ENCODE measurements at regions of chr1 and their contacts with region 1.

Region 1: DNA sequence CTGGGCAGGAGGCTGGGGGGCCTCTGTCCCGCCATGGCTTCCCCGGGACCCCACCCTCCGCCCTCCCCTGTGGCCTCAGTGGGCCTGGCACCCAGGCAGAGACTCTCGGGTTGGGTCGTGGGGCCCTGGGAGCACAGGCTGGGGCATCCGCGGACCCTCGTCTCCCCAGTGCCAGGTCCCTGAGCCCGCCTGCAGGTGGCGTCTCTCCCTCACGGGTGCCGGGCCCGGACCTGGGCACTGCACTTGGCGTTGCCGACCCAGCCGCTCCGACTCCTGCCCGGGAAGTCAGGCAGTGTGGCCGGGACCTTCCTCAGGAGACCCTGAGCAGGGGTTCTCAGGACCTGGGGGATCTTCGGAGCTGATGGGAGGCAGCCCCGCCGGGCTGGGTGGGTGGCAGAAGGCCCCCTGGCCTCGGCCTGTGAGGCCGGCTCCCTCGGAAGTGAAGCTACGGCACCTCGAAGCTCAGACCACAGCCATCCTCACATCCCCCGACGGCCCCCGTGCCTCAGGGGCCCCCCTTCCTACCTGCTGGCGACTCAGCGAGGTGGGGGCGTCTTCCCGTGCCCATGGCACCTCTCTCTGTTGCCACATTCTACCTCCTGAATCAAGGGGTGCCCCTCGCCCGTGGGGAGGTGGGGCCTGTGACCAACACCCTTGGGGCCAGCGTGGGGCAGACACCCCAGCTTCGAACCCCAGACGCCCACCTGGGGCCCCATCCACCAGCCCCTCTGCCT is 6.4 kb upstream of the C1orf159 start:
- DNase-seq: peak; percentile 89
- H3K4me3 Mint-ChIP-seq: no peak overlapping the region
- H3K27ac Mint-ChIP-seq: no peak overlapping the region
- H3K4me1 Mint-ChIP-seq: peaks cover 6% of the 10 kb centered on the region
- H3K27me3 Mint-ChIP-seq: peaks cover 7% of the 10 kb centered on the region

Region 2: GRCh38 chr1:890661-891060 is 231.6 kb before region 1 on chr1:
- CTCF ChIA-PET with region 1: no interaction called
- POLR2A ChIA-PET with region 1: no interaction called
- intact Hi-C with region 1: no loop called
- DNase-seq: no peak
- H3K4me3 Mint-ChIP-seq: no peak overlapping the region
- H3K27ac Mint-ChIP-seq: no peak overlapping the region
- H3K4me1 Mint-ChIP-seq: peaks cover 14% of the 10 kb centered on the region
- H3K27me3 Mint-ChIP-seq: peaks cover 40% of the 10 kb centered on the region

Region 3: GRCh38 chr1:1079408-1080121 is 42.7 kb before region 1 on chr1:
- CTCF ChIA-PET with region 1: no interaction called
- POLR2A ChIA-PET with region 1: no interaction called
- intact Hi-C with region 1: no loop called
- DNase-seq: peak; percentile 54
- H3K4me3 Mint-ChIP-seq: peak overlapping the region; percentile 32
- H3K27ac Mint-ChIP-seq: no peak overlapping the region
- H3K4me1 Mint-ChIP-seq: peaks cover 6% of the 10 kb centered on the region
- H3K27me3 Mint-ChIP-seq: peaks cover 4% of the 10 kb centered on the region

Region 4: GRCh38 chr1:1144122-1144842 is 22.0 kb after region 1 on chr1:
- CTCF ChIA-PET with region 1: no interaction called
- POLR2A ChIA-PET with region 1: no interaction called
- intact Hi-C with region 1: no loop called
- DNase-seq: peak; percentile 80
- H3K4me3 Mint-ChIP-seq: peak overlapping the region; percentile 39
- H3K27ac Mint-ChIP-seq: peak overlapping the region; percentile 89
- H3K4me1 Mint-ChIP-seq: peaks cover 19% of the 10 kb centered on the region
- H3K27me3 Mint-ChIP-seq: no peaks in the 10 kb centered on the region

Region 5: GRCh38 chr1:1200851-1201810 is 78.9 kb after region 1 on chr1:
- CTCF ChIA-PET with region 1: interaction called, 13 read pairs
- POLR2A ChIA-PET with region 1: interaction called, 3 read pairs
- intact Hi-C with region 1: no loop called
- DNase-seq: peak; percentile 93
- H3K4me3 Mint-ChIP-seq: peak overlapping the region; percentile 56
- H3K27ac Mint-ChIP-seq: peak overlapping the region; percentile 78
- H3K4me1 Mint-ChIP-seq: peaks cover 13% of the 10 kb centered on the region
- H3K27me3 Mint-ChIP-seq: no peaks in the 10 kb centered on the region

Region 6: DNA sequence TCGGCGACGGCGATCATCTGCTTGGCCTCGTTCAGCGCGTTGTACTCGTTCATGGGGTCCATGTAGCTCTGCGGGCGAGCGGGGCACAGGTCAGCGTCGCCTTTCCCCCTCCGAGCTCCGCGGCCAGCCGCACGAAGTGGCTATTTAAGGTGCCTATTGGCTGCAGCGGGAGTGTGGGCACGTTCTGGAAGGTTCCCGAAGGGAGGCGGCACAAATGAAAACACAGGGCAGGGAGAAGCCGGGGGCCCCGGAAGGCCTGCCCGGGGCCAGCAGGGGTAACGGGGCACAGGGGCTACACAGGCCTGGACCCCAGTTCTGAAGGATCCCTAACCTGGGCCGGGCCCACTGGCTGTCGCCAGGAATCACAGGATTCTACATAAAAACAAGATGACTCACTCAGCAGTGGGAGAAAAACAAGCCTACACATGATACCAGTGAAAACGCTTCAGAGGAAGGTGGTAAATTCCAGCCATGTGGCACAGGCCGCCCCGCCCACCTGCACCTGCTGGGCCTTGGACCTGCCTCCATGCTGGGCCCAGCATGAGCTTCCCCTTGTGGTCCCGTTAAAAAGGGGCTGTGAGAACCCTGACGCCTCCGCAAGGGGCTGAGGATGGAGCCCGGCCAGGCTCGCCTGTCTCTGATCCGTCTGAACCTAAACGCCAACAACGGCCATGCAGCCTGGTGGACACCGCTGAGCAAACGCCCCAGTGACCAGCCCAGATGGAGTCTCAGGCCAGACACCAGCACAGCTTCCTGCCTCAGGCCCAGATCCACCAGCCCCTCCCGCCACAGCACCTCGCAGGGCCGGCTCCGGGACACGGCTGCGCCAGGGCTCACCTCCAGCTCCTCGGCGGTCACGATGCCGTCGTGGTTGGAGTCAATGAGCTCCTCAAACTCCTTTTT is 95.6 kb after region 1 on chr1:
- CTCF ChIA-PET with region 1: interaction called, 18 read pairs
- POLR2A ChIA-PET with region 1: interaction called, 3 read pairs
- intact Hi-C with region 1: no loop called
- DNase-seq: peak; percentile 84
- H3K4me3 Mint-ChIP-seq: peak overlapping the region; percentile 78
- H3K27ac Mint-ChIP-seq: peak overlapping the region; percentile 100
- H3K4me1 Mint-ChIP-seq: peaks cover 62% of the 10 kb centered on the region
- H3K27me3 Mint-ChIP-seq: no peaks in the 10 kb centered on the region

Region 7: DNA sequence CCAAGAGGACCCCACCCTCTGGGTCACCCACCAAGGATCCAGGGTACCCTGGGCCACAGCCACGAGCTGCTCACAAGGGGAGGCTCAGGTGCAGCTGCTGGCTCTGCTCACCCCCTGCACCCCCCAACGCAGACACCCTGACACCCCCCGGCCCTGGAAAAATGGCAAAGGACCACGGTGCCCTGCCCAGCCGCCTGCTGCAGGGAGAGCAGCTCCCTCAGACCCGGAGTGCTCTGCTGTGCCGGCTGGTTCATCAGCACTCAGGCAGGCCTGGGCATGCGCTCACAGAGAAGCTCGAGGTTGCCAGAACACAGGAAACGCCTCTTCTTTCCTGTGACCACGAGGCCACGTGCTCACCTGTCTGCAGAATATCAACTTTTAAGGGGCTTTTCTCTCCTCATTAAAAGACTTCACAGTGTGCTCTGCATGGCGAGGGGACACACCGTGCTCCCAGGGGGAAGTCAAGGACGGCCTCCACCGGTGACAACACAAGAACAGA is 128.6 kb after region 1 on chr1:
- CTCF ChIA-PET with region 1: interaction called, 43 read pairs
- POLR2A ChIA-PET with region 1: interaction called, 3 read pairs
- intact Hi-C with region 1: loop called (anchors 5 kb)
- DNase-seq: peak; percentile 88
- H3K4me3 Mint-ChIP-seq: peak overlapping the region; percentile 36
- H3K27ac Mint-ChIP-seq: peak overlapping the region; percentile 90
- H3K4me1 Mint-ChIP-seq: peaks cover 16% of the 10 kb centered on the region
- H3K27me3 Mint-ChIP-seq: no peaks in the 10 kb centered on the region

Region 8: GRCh38 chr1:1349256-1350012 is 227.2 kb after region 1 on chr1 and contains the start of gene DVL1:
- CTCF ChIA-PET with region 1: interaction called, 10 read pairs
- POLR2A ChIA-PET with region 1: no interaction called
- intact Hi-C with region 1: no loop called
- DNase-seq: peak; percentile 72
- H3K4me3 Mint-ChIP-seq: peak within 1 kb of the TSS; percentile 74
- H3K27ac Mint-ChIP-seq: no peak within 1 kb of the TSS
- H3K4me1 Mint-ChIP-seq: peaks cover 22% of the 10 kb centered on the region
- H3K27me3 Mint-ChIP-seq: peaks cover 25% of the 10 kb centered on the region
- total RNA-seq, gene DVL1: 37.6 to 38.6 TPM